ENCODE measurements at regions of chr7 and their contacts with region 1.

Region 1: DNA sequence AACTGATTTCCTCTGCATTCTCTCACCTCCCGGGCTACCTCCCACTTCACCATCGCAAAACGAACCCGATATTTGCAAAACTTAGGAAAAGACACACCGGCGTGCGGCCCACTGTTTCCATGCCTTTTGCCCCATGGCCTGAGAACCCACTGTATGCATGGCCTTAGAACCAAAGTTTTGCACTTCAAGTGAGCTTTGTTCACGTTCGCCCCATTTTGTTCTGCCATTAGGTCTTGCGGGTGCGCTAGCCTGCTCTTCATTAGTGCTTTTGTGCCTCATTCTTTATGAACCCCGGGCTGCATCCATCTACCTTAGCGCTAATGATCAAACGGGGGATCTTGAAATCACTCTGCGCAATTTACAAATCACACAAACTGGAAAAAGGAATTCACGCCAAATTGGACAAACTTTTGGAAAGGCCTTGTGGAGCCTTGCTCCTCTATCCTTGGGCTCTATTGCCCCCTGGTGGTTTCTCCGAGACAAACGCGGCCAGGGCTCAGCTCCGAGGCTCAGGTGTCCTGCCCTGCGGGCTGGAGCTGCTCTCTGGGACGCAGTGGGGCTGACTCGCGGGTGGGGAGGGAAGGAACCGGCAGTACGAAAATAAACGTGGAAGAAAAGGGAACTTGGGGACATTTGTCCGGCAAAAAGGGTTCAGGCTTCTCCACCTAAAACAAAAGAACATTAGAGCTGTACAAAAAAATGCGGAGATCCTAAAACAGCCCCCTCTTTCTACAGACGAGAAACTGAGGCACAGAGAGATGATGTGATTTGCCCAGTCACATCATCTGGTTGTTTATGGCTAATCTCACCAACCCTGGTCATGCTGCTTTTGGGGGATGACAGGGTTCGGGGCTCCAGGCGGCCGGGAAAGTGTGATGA is 300.4 kb upstream of the NFE2L3 start:
- DNase-seq: no peak
- H3K4me3 ChIP-seq: peak overlapping the region; percentile 37 to 48 (median 41)
- H3K27ac ChIP-seq: peak overlapping the region; percentile 84 to 87 (median 84)
- H3K4me1 ChIP-seq: peaks cover 26 to 89% (median 82%) of the 10 kb centered on the region in 4 donors
- H3K27me3 ChIP-seq: peaks cover 0 to 60% (median 16%) of the 10 kb centered on the region in 4 donors
- CTCF ChIP-seq: peak; percentile 86 to 90 (median 87)
- EP300 ChIP-seq: no peak
- POLR2A ChIP-seq: no peak

Region 2: GRCh38 chr7:25259587-25260243 is 591.9 kb before region 1 on chr7:
- intact Hi-C with region 1: loop called (anchors 5 kb)
- DNase-seq: no peak
- H3K4me3 ChIP-seq: no peak overlapping the region
- H3K27ac ChIP-seq: no peak overlapping the region
- H3K4me1 ChIP-seq: peaks cover 4 to 25% (median 24%) of the 10 kb centered on the region in 4 donors
- H3K27me3 ChIP-seq: no peaks in the 10 kb centered on the region
- CTCF ChIP-seq: peak; percentile 81 to 91 (median 89)
- EP300 ChIP-seq: no peak
- POLR2A ChIP-seq: no peak

Region 3: GRCh38 chr7:25565949-25566348 is 285.6 kb before region 1 on chr7:
- intact Hi-C with region 1: loop called (anchors 2 kb)
- DNase-seq: peak; percentile 94
- H3K4me3 ChIP-seq: no peak overlapping the region
- H3K27ac ChIP-seq: peak overlapping the region in 1 of 4 donors; percentile 52
- H3K4me1 ChIP-seq: peaks cover 2 to 41% (median 36%) of the 10 kb centered on the region in 4 donors
- H3K27me3 ChIP-seq: no peaks in the 10 kb centered on the region
- CTCF ChIP-seq: peak; percentile 100
- EP300 ChIP-seq: no peak
- POLR2A ChIP-seq: no peak

Region 4: GRCh38 chr7:25714013-25714412 is 137.6 kb before region 1 on chr7:
- intact Hi-C with region 1: loop called (anchors 5 kb)
- DNase-seq: no peak
- H3K4me3 ChIP-seq: no peak overlapping the region
- H3K27ac ChIP-seq: peak overlapping the region in 3 of 4 donors; percentile 16 to 68 (median 46)
- H3K4me1 ChIP-seq: peaks cover 9 to 49% (median 45%) of the 10 kb centered on the region in 4 donors
- H3K27me3 ChIP-seq: no peaks in the 10 kb centered on the region
- CTCF ChIP-seq: no peak
- EP300 ChIP-seq: no peak
- POLR2A ChIP-seq: no peak

Region 5: GRCh38 chr7:25795824-25796235 is 55.7 kb before region 1 on chr7:
- intact Hi-C with region 1: loop called (anchors 5 kb)
- DNase-seq: no peak
- H3K4me3 ChIP-seq: peak overlapping the region in 3 of 4 donors; percentile 23 to 43 (median 23)
- H3K27ac ChIP-seq: peak overlapping the region; percentile 74 to 82 (median 80)
- H3K4me1 ChIP-seq: peaks cover 9 to 49% (median 34%) of the 10 kb centered on the region in 4 donors
- H3K27me3 ChIP-seq: no peaks in the 10 kb centered on the region
- CTCF ChIP-seq: no peak
- EP300 ChIP-seq: peak; percentile 72
- POLR2A ChIP-seq: no peak

Region 6: DNA sequence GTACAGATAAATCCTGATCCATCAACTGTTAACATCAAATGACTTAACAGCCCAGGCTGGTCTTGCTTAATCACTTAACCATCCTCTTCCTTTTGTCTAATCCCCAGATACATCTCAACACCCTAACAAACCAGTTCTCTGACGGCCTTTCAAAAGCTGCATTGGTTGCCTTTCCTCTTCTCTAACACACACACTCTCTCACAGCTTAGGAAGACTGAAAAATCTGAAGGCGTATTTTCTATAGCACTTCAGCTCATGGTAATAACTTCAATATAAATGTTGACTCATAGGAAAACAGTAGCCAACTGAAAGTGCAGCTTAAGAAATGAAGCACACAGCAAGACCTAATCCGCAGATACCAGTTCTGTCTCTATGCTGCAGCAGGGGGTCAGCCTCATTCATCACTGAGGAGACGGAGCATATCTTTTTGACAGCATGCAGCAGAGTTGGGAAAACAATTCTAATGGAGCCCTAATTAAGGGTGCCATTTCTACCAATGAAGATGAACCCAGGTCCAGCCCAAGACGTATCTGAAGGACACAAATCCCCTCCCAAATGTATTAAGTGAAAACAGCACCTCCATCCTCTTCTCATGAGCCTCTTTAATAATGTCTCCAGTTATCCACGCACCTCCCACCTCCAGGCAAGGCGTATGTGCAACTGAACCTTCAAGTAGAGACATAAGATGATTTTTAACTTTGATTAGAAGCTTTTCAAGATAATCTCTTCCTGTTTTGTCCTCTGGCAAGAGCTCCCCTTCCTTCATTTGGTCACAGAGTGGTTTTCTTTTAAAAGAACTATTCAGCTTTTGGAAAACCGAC is 88.7 kb after region 1 on chr7:
- intact Hi-C with region 1: no loop called
- DNase-seq: no peak
- H3K4me3 ChIP-seq: no peak overlapping the region
- H3K27ac ChIP-seq: no peak overlapping the region
- H3K4me1 ChIP-seq: no peaks in the 10 kb centered on the region
- H3K27me3 ChIP-seq: peaks cover 0 to 23% (median 0%) of the 10 kb centered on the region in 4 donors
- CTCF ChIP-seq: no peak
- EP300 ChIP-seq: no peak
- POLR2A ChIP-seq: no peak

Region 7: GRCh38 chr7:25989140-25989705 is 137.7 kb after region 1 on chr7:
- intact Hi-C with region 1: no loop called
- DNase-seq: no peak
- H3K4me3 ChIP-seq: no peak overlapping the region
- H3K27ac ChIP-seq: no peak overlapping the region
- H3K4me1 ChIP-seq: no peaks in the 10 kb centered on the region
- H3K27me3 ChIP-seq: peaks cover 0 to 10% (median 0%) of the 10 kb centered on the region in 4 donors
- CTCF ChIP-seq: no peak
- EP300 ChIP-seq: no peak
- POLR2A ChIP-seq: no peak

Region 8: DNA sequence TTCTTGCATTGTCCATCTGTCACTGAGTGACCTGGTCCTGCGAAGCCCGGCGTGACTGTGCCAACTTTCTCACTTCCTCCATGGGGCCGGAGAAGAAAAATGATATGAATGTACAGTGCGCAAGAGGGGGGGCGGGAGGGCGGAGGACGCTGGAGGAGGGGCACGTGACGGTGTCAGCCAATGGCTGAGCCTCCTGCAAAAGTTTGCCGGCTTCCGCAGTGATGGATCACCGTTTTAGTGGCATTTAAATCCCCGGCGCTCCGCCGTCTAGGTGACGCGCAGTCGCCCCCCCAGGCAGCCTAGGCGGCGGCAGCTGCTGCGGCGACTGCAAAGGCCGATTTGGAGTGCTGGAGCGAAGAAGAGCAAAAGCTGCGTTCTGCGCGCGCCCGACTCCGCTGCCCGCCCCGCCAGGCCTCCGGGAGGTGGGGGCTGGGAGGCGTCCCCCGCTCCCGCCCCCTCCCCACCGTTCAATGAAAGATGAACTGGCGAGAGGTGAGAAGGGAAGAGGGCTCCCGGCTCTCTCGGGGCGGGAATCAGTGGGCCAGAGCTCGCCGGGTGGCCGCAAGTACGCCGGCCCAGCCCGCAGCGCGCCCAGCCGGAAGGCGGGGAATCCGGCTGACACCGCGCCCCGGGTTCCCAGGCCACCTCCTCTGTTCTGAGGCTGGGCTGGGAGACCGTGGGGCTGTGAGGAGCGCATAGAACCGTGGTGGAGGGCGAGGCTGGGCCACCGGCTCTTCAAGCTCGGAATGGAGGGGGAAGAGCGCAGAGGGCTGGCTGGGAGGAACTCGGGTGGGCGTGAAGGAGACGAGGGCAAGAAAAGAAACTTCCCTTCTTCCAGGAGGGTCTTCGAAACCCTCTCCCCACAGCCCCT is 1244.6 kb after region 1 on chr7 and contains the start of gene HOXA1:
- intact Hi-C with region 1: loop called (anchors 5 kb)
- DNase-seq: peak; percentile 98
- H3K4me3 ChIP-seq: peak within 1 kb of the TSS; percentile 79 to 100 (median 96)
- H3K27ac ChIP-seq: peak within 1 kb of the TSS; percentile 96 to 100 (median 99)
- H3K4me1 ChIP-seq: peaks cover 26 to 54% (median 45%) of the 10 kb centered on the region in 4 donors
- H3K27me3 ChIP-seq: peaks cover 0 to 8% (median 0%) of the 10 kb centered on the region in 4 donors
- CTCF ChIP-seq: no peak
- EP300 ChIP-seq: no peak
- POLR2A ChIP-seq: peak; percentile 56
- total RNA-seq, gene HOXA1: 0.17 to 1.4 (median 0.56) TPM